ENCODE measurements at regions of chr14 and their contacts with region 1.

Region 1: DNA sequence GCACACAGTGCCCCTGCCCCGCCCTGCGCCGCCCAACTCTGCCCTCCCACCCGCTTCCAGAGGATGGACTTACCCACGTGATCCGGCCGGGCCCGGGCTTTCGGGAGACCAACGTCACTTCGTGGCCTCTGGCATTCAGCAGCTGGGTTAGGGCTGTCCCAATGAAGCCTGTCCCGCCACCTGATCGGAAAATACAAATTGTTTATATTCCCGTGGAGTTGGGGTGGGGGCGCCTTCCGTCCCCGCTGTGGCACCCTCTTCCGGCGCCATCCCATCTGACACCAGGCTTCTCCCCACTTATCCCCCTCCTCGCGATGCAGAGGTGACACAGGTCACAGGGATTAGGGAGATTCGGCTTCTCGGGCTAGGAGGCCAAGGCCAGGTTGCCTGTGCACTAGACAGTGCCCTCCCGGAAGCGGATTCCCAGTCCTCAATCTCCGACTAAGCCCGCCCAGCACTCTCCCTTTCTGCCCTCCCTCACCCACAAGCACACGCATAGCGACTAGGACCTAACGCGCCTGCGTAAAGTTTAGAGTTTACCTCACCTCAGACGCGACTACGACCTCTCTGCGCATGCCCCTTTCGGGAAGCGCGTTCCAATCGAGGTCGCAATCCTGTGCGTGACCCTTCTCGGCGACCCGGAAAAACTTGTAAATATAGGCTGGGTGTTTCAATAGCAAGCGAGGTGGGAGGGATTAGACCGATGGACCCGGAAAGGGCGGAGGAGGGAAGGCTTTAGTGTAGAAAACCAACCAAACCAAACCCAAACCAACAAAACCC is at the start of gene SDR39U1:
- DNase-seq: peak; percentile 98
- H3K4me3 ChIP-seq: peak within 1 kb of the TSS; percentile 46 to 69 (median 58)
- H3K27ac ChIP-seq: peak within 1 kb of the TSS; percentile 95 to 98 (median 96)
- H3K4me1 ChIP-seq: peaks cover 7 to 37% (median 14%) of the 10 kb centered on the region in 4 donors
- H3K27me3 ChIP-seq: no peaks in the 10 kb centered on the region
- CTCF ChIP-seq: peak in 2 of 5 experiments; percentile 10 to 19
- EP300 ChIP-seq: no peak
- POLR2A ChIP-seq: peak; percentile 94
- total RNA-seq, gene SDR39U1: 18.3 to 202 (median 39.3) TPM

Region 2: GRCh38 chr14:23816371-23816770 is 626.1 kb before region 1 on chr14:
- in situ Hi-C with region 1: no loop called
- intact Hi-C with region 1: no loop called
- DNase-seq: peak; percentile 28
- H3K4me3 ChIP-seq: no peak overlapping the region
- H3K27ac ChIP-seq: peak overlapping the region in 1 of 4 donors; percentile 12
- H3K4me1 ChIP-seq: peaks cover 0 to 5% (median 0%) of the 10 kb centered on the region in 4 donors
- H3K27me3 ChIP-seq: no peaks in the 10 kb centered on the region
- CTCF ChIP-seq: no peak
- EP300 ChIP-seq: no peak
- POLR2A ChIP-seq: no peak

Region 3: GRCh38 chr14:24232121-24232644 is 210.3 kb before region 1 on chr14 and contains the start of gene NEDD8:
- in situ Hi-C with region 1: loop called in 3 of 4 experiments (anchors 25 kb)
- intact Hi-C with region 1: loop called (anchors 5 kb)
- DNase-seq: peak; percentile 93
- H3K4me3 ChIP-seq: peak within 1 kb of the TSS; percentile 55 to 87 (median 74)
- H3K27ac ChIP-seq: peak within 1 kb of the TSS; percentile 86 to 96 (median 92)
- H3K4me1 ChIP-seq: peaks cover 16 to 29% (median 23%) of the 10 kb centered on the region in 4 donors
- H3K27me3 ChIP-seq: no peaks in the 10 kb centered on the region
- CTCF ChIP-seq: no peak
- EP300 ChIP-seq: no peak
- POLR2A ChIP-seq: peak; percentile 69
- total RNA-seq, gene NEDD8: 42.2 to 113 (median 69.9) TPM